ENCODE measurements at regions of chr3 and their contacts with region 1.

Region 1: DNA sequence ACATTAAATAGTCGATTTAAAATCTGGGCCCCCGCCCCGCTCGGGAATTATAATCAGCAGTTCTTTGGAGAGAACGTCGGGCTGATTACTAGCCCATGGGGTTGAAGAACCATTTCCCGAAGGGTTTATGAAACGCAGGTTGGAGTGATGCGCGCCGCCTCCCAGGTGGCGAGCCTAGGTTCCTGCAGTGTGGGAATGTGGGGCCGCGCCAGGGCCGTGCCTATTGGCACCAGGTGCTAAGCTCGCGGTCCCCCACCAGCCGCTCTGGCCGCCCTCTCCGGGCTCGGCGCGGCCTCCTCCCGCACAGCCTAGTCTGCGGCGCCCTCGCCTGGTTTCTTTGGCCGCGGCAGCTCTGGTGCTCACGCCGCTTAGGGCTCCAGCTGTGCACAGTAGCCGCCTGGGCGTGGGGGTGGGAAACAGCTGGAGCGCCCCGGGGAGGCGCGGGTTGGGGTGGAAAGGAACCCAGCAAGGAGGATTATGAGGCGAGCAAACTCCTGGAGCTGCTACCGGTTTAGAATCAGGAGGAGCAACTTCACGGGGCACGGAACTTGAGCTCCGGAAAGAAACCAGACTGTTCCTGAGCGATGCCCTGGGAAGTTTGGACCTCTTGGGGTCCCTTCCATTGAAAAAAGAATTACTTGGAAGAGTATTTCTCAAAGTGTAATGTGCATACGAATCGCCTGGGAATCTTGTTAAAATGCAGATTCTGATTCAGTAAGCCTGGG is 5.6 kb upstream of the MECOM start:
- DNase-seq: no peak
- H3K4me3 Mint-ChIP-seq: peak overlapping the region; percentile 25
- H3K27ac Mint-ChIP-seq: no peak overlapping the region
- H3K4me1 Mint-ChIP-seq: peaks cover 27% of the 10 kb centered on the region
- H3K27me3 Mint-ChIP-seq: peaks cover 87% of the 10 kb centered on the region

Region 2: DNA sequence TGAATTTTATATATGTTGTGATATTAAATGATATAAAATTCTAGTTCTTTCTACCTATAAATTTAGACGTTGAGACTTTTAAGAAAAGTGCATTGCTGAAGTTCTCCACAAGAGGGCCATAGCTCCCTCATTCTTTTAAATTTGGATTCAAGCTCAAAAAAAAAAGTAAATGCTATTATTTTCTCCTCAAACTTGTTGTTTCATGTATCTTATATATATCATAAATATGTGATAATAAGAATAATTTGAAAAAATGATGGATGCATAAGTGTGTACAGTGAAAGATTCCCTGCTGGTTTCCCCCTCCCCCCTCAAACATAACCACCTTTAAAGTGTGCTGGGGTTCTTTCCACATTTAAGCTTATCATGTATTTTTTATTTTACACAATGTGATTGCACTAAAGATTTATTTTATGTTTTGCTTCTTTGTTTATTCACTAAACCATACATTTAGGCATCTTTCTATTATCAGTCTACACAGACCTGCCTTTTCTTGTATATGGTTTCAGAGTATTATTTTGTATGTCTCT is 804.0 kb before region 1 on chr3:
- intact Hi-C with region 1: loop called (anchors 10 kb)
- DNase-seq: no peak
- H3K4me3 Mint-ChIP-seq: no peak overlapping the region
- H3K27ac Mint-ChIP-seq: no peak overlapping the region
- H3K4me1 Mint-ChIP-seq: no peaks in the 10 kb centered on the region
- H3K27me3 Mint-ChIP-seq: no peaks in the 10 kb centered on the region

Region 3: GRCh38 chr3:169241991-169242707 is 427.0 kb before region 1 on chr3:
- intact Hi-C with region 1: loop called (anchors 10 kb)
- DNase-seq: no peak
- H3K4me3 Mint-ChIP-seq: no peak overlapping the region
- H3K27ac Mint-ChIP-seq: no peak overlapping the region
- H3K4me1 Mint-ChIP-seq: no peaks in the 10 kb centered on the region
- H3K27me3 Mint-ChIP-seq: peaks cover 37% of the 10 kb centered on the region

Region 4: DNA sequence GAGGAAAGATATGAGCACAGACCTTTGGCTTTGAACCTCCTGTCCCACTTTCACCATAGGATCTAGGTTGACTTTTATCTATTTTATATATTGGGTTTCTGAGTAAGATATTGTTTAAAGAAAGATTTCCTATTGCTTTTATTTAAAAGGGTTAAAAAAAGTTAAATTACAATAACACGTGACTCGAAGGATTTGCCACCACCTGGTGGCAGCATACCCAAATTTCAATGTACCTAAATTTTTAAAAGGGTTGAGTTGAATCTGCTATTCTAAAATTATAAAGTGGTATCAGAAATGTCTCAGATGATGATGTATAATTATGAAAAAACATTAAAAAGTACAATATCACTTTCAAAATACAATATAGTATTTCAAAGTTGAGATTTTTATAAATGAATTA is 374.0 kb before region 1 on chr3:
- intact Hi-C with region 1: loop called (anchors 10 kb)
- DNase-seq: no peak
- H3K4me3 Mint-ChIP-seq: no peak overlapping the region
- H3K27ac Mint-ChIP-seq: no peak overlapping the region
- H3K4me1 Mint-ChIP-seq: no peaks in the 10 kb centered on the region
- H3K27me3 Mint-ChIP-seq: peaks cover 5% of the 10 kb centered on the region

Measured in activated T-helper 1 cell treated with anti-CD3 and anti-CD28 coated beads, Interleukin-12 subunit alpha, Interleukin-12 subunit beta, Interleukin-2, Interleukin-4 antibody, amounts not matched to agents 30 ng/mL and 10 ng/mL and 1 ng/mL, durations not matched to agents 14 hours and 24 hours and 36 hours (primary cell).